CD8-positive, alpha-beta T cell (primary cell): ENCODE measurements at regions of chr2 and their contacts with region 1.

Region 1: DNA sequence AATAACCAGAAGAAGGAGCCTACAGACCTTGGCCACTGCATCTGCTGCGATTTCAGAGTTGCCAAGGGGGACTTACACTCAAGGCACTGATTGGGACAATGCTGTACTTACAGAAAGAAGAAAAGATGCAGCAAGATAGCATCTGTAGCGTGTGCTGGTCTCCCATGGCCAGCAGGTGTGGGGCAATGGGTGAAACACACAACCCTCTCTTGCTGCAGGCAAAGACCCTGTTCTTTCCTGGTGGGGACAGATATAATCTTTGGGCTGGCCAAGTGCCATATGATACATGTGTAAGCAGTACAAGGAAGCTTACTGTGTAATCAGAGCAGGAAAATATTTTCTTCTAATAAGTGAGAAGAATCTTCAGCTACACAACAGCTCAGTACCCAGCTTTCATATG is 85.3 kb upstream of the GPR45 start:
- DNase-seq: no peak
- ATAC-seq: no peak
- H3K4me3 ChIP-seq: no peak overlapping the region
- H3K4me3 Mint-ChIP-seq: no peak overlapping the region
- H3K27ac ChIP-seq: no peak overlapping the region
- H3K27ac Mint-ChIP-seq: no peak overlapping the region
- H3K4me1 ChIP-seq: no peaks in the 10 kb centered on the region
- H3K4me1 Mint-ChIP-seq: no peaks in the 10 kb centered on the region
- H3K27me3 ChIP-seq: no peaks in the 10 kb centered on the region
- H3K27me3 Mint-ChIP-seq: peaks cover 30% of the 10 kb centered on the region
- CTCF ChIP-seq: no peak

Region 2: GRCh38 chr2:105176429-105176828 is 20.2 kb after region 1 on chr2:
- CTCF ChIA-PET with region 1: no interaction called
- POLR2A ChIA-PET with region 1: no interaction called
- intact Hi-C with region 1: loop called in 1 of 2 experiments (anchors 2 kb)
- DNase-seq: no peak
- ATAC-seq: no peak
- H3K4me3 ChIP-seq: no peak overlapping the region
- H3K4me3 Mint-ChIP-seq: no peak overlapping the region
- H3K27ac ChIP-seq: no peak overlapping the region
- H3K27ac Mint-ChIP-seq: no peak overlapping the region
- H3K4me1 ChIP-seq: no peaks in the 10 kb centered on the region
- H3K4me1 Mint-ChIP-seq: peaks cover 3% of the 10 kb centered on the region
- H3K27me3 ChIP-seq: no peaks in the 10 kb centered on the region
- H3K27me3 Mint-ChIP-seq: peaks cover 21% of the 10 kb centered on the region
- CTCF ChIP-seq: no peak